Heart right ventricle (tissue), 16 donors: ENCODE measurements at regions of chr5 and their contacts with region 1.

Region 1: DNA sequence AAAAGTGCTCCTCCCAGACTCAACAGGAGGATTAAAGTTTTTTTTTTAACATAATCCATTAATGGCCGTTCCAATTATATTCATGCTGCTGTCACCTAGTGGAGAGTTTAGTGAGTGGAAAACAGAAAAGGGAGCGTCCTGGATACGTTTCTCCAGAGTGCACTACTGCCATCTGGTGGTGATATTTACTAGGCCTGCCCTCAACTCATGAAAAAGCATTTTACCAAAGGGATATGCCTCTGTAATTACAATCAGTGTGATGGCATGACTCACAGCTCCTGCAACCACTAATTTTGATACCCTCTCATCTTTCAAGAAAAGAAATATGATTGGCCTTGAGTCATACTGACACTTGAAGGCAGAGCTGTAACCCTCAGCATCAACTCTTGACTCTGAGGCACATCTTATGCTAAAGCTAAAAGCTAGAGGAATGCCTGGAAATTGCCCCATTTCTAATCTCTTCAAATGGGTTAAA is 20.0 kb downstream of the MINAR2 start:
- DNase-seq: peak in 1 of 2 donors; percentile 72
- ATAC-seq: peak; percentile 73 to 94 (median 88)
- H3K4me3 ChIP-seq: no peak overlapping the region
- H3K27ac ChIP-seq: no peak overlapping the region
- H3K4me1 ChIP-seq: peaks cover 0 to 3% (median 0%) of the 10 kb centered on the region in 9 donors
- H3K27me3 ChIP-seq: peaks cover 0 to 3% (median 0%) of the 10 kb centered on the region in 7 donors
- CTCF ChIP-seq: peak; percentile 95 to 99 (median 97)

Region 2: GRCh38 chr5:128905571-128906110 is 862.3 kb before region 1 on chr5:
- intact Hi-C with region 1: loop called in 9 of 10 experiments (anchors 5 to 10 kb)
- DNase-seq: peak in 1 of 2 donors; percentile 38
- ATAC-seq: peak in 7 of 8 donors; percentile 55 to 85 (median 73)
- H3K4me3 ChIP-seq: no peak overlapping the region
- H3K27ac ChIP-seq: no peak overlapping the region
- H3K4me1 ChIP-seq: no peaks in the 10 kb centered on the region
- H3K27me3 ChIP-seq: no peaks in the 10 kb centered on the region
- CTCF ChIP-seq: peak; percentile 79 to 90 (median 84)

Region 3: GRCh38 chr5:129172580-129172979 is 595.4 kb before region 1 on chr5:
- intact Hi-C with region 1: loop called in 8 of 10 experiments (anchors 2 to 10 kb)
- DNase-seq: no peak
- ATAC-seq: peak in 6 of 8 donors; percentile 39 to 71 (median 55)
- H3K4me3 ChIP-seq: no peak overlapping the region
- H3K27ac ChIP-seq: no peak overlapping the region
- H3K4me1 ChIP-seq: peaks cover 0 to 6% (median 0%) of the 10 kb centered on the region in 9 donors
- H3K27me3 ChIP-seq: no peaks in the 10 kb centered on the region
- CTCF ChIP-seq: peak in 7 of 9 donors; percentile 17 to 46 (median 35)

Region 4: DNA sequence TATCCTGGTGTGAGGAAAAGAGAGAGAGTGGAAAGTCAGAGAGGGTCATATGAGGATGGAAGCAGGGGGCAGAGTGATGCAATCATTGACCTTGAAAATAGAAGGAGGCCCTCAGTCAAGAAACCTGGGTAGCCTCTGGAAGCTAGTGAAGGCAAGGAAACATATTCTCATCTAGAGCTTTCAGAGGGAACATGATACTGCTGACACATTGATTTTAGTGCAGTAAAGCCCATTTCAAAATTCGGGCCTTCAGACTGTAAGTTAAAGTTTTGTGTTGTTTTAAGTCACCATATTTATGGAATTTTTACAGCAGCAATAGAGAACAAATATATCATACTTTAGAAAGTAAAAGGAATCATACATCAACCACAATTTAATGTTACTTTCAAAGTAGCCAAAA is 220.8 kb before region 1 on chr5:
- intact Hi-C with region 1: no loop called
- DNase-seq: no peak
- ATAC-seq: no peak
- H3K4me3 ChIP-seq: no peak overlapping the region
- H3K27ac ChIP-seq: no peak overlapping the region
- H3K4me1 ChIP-seq: no peaks in the 10 kb centered on the region
- H3K27me3 ChIP-seq: no peaks in the 10 kb centered on the region
- CTCF ChIP-seq: no peak

Region 5: DNA sequence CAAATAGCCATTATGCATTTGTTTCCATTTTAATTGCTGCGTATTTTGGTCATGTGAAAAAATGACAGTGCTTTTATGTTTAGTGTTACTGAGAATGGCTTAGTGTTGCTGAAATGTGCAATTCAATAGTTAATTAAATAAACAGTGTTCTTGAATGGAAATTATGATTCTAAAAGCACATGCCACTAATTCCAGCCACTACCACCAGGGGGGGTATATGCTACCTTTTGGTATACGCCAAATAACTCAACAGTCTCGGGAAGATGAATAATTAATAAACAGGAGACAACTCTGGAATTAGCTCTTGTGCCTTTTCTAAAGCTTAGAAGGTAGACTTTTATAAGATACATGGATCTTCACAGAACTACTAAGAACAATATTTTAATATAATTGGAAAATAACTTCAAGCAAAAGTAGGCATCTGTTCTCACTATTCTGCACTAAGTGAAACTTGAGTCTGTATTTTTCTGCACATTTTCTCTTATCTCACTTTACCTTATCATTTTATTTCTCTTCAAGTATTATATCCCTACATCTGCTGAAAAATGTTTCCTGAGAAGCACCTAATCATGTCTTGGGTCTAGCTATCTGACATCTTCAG is 103.5 kb before region 1 on chr5:
- intact Hi-C with region 1: loop called in 1 of 10 experiments (anchors 10 kb)
- DNase-seq: peak in 1 of 2 donors; percentile 31
- ATAC-seq: no peak
- H3K4me3 ChIP-seq: no peak overlapping the region
- H3K27ac ChIP-seq: no peak overlapping the region
- H3K4me1 ChIP-seq: no peaks in the 10 kb centered on the region
- H3K27me3 ChIP-seq: no peaks in the 10 kb centered on the region
- CTCF ChIP-seq: peak; percentile 43 to 75 (median 68)

Region 6: DNA sequence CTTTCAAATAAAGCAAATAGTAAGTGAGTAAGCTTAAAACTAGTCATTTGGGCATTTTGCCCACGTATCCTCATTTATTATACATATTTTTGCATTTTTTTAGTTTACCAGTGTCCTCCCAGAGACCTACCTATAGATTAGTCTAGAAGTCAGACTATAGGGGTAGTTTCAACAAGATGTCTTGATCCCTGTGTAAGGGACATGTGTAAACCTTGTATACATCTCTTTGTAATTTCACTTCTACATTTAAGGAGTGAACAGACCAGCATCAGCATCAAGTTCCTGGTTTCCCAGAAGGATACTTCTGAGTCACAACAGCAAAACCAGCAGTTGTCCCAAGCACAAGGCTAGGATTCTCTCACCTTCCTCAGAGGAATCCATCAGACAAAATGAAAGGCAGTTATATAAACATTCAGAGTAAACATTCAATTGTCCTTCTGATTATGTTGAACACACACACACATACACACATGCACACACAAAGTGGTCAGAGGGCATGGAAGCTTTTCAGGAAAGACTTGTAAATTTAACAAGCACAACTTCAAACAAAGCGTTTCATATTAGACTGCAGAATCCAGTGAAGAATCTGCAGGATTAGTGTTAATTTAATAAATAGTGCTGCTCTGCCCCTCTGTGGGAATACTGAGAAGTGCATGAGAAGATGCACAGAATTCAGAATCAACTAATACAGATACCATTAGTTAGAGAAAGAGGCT is 1341.8 kb after region 1 on chr5:
- intact Hi-C with region 1: loop called in 9 of 10 experiments (anchors 2 to 10 kb)
- DNase-seq: peak in 1 of 2 donors; percentile 6
- ATAC-seq: peak in 2 of 8 donors; percentile 57 to 61
- H3K4me3 ChIP-seq: no peak overlapping the region
- H3K27ac ChIP-seq: no peak overlapping the region
- H3K4me1 ChIP-seq: peaks cover 0 to 10% (median 0%) of the 10 kb centered on the region in 9 donors
- H3K27me3 ChIP-seq: peaks cover 0 to 7% (median 0%) of the 10 kb centered on the region in 7 donors
- CTCF ChIP-seq: peak; percentile 42 to 86 (median 71)